Activated CD4-positive, alpha-beta T cell treated with anti-CD3 and anti-CD28 coated beads for 36 hours (primary cell): ENCODE measurements at regions of chr17 and their contacts with region 1.

Region 1: DNA sequence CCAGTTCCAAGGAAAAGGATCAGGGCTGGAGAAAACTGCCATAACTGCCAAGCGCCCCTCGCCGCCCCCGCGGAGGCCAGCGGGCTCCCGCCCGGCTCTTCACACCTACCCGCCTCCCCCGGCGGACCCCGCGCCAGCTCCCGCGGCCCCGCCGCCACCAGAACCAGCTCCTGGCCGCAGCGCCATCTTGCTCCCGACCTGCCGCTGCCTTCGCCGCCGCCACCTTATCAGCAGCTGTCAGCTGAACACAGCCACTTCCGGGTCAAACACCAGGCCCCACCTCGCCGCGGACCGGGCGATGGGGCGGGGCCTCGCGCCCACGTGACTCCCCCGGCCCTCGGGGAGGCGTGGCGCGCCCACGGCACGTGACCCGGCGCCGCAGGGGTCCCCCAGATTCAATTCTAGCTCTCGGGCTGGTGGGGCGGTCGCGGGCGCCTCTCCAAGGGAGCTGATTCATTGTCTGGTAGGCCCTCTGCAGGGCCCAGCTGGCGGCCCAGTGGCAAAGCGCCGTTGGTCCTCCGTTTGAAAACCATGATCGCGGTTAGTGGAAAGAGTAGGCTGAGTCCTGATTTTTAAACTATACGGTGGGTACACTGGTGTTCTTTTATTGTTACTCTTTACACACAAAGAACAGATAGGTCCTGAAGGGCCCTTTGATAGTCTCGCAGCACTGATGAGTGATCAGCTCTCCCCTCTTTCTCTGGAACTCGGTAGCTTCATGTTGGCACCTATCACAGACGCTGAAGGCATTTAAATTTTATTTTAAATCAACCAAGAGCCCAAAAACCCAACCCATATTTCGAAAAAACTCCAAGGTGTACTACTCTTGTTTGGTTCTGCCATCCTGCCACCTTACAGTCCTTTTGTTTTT is at the start of gene SYNRG:
- DNase-seq: peak; percentile 96
- ATAC-seq: peak; percentile 82
- H3K4me3 Mint-ChIP-seq: peak within 1 kb of the TSS; percentile 85
- H3K27ac Mint-ChIP-seq: peak within 1 kb of the TSS; percentile 98
- H3K4me1 Mint-ChIP-seq: peaks cover 37% of the 10 kb centered on the region
- H3K27me3 Mint-ChIP-seq: no peaks in the 10 kb centered on the region
- total RNA-seq, gene SYNRG: 39.0 to 46.7 TPM

Region 2: DNA sequence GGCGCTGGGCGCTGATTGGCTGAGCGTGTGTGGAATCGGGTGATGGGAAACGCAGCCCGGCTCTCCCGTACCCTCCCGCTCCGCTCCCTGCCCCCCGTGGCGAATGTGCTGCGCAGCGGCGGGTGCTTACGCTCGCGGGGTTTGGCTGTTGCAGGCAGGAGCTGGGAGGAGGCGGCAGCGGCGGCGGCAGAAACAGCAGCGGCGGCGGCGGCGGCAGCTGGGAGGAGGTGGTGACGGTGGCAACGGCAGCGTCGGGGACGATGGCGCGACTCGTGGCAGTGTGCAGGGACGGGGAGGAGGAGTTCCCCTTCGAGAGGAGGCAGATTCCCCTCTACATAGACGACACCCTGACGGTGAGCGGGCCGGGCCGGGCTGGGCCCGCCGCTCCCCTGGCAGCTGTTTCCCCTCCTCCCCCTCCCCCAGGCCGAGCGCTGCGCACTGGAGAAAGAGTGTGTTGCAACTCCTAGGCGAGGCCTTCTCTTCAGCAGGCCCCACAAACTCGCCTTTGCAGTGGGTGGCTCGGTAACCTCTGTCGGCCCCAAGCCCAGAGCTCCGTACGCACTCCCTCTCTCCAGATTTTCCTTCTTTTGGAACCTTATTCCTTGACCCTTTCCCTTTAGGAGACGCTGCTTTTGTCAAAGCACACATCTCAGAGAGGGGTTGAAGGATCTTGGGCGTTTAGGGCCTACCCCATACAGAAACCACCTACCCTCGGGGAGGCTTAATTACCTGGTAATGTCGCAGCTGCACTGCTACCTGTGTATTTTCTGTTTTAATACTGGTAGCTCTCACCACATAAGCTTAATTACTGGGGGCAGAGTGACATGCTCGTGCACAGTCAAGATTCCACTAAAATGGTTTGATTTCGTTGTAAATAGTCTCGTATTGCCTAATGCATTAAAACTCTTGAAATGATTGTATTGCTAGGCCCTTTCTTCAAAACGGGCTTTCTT is 1063.7 kb before region 1 on chr17:
- CTCF ChIA-PET with region 1: no interaction called
- POLR2A ChIA-PET with region 1: no interaction called
- intact Hi-C with region 1: loop called in 1 of 2 experiments (anchors 1 kb)
- DNase-seq: peak; percentile 98
- ATAC-seq: peak; percentile 81
- H3K4me3 Mint-ChIP-seq: peak overlapping the region; percentile 96
- H3K27ac Mint-ChIP-seq: peak overlapping the region; percentile 95
- H3K4me1 Mint-ChIP-seq: peaks cover 37% of the 10 kb centered on the region
- H3K27me3 Mint-ChIP-seq: no peaks in the 10 kb centered on the region

Region 3: DNA sequence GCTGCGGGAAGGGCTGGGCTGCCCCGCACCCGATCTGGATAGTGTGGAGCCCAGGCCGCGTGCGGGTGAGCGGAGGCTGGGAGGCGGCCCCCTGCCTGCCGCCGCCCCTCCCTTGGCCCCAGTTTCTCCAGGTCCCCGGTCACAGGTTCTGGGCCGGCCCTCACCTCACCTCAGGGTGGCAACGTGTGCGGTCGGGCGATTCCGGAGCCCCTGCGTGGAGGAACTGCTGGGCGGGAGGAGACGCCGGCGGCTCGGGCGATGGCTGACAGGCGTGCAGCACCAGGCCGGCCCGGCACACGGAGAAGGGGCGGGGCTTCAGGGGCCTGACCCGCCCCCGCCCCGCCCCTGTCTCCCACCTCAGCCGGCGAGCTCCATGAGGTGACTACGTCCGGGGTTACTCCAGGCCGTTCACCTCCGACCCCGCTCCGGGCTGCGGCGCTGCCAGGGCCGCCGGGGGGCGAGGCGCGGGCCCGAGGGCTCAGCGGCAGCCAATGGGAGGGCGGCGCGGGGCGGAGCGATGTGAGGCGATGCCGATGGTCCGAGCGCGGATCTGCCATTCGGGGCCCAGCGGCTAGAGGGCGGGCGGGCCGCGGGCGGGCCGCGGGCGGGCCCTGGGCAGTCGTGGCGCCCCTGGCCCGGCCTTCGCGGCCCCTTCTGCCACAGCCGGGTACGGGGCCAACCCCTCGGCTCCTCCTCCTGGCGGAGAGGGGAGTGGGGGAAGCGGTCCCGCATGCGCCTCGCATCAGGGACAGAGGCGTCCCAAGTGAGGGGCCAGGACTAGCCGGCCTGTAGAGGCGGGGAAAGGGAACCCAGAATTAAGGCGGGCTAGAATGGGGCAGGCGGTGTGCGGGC is 250.3 kb before region 1 on chr17:
- CTCF ChIA-PET with region 1: no interaction called
- POLR2A ChIA-PET with region 1: interaction called, 5 read pairs
- intact Hi-C with region 1: loop called in 1 of 2 experiments (anchors 1 kb)
- DNase-seq: peak; percentile 96
- ATAC-seq: peak; percentile 98
- H3K4me3 Mint-ChIP-seq: peak overlapping the region; percentile 88
- H3K27ac Mint-ChIP-seq: peak overlapping the region; percentile 83
- H3K4me1 Mint-ChIP-seq: peaks cover 23% of the 10 kb centered on the region
- H3K27me3 Mint-ChIP-seq: no peaks in the 10 kb centered on the region

Region 4: DNA sequence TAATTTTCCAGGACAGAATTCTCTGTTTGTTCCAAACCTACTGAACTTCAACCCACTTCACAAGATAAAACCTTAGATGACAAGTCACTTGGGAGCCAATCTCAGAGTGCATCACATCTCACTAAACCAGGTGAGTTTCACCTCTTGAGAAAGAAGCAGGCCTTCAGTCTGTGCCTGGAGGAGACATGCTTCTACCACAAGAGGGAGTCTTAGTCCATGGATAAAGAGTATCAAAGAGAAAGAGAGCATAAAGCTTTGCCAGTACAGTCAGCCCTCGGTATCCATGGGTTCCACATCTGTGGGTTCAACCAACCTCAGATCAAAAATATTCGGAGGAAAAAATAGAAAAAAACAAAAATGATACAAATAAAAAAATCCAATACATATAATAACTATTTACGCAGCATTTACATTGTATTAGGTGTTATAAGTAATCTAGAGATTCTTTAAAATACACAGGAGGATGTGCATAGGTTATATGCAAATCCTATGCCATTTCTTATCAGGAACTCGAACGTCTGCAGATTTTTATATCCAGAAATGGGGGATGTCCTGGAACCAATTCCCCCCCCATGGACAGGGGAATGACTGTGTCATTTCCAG is 82.1 kb before region 1 on chr17:
- CTCF ChIA-PET with region 1: interaction called, 4 read pairs
- POLR2A ChIA-PET with region 1: no interaction called
- intact Hi-C with region 1: loop called (anchors 1 to 5 kb)
- DNase-seq: peak; percentile 25
- ATAC-seq: peak; percentile 86
- H3K4me3 Mint-ChIP-seq: no peak overlapping the region
- H3K27ac Mint-ChIP-seq: no peak overlapping the region
- H3K4me1 Mint-ChIP-seq: peaks cover 7% of the 10 kb centered on the region
- H3K27me3 Mint-ChIP-seq: no peaks in the 10 kb centered on the region

Region 5: DNA sequence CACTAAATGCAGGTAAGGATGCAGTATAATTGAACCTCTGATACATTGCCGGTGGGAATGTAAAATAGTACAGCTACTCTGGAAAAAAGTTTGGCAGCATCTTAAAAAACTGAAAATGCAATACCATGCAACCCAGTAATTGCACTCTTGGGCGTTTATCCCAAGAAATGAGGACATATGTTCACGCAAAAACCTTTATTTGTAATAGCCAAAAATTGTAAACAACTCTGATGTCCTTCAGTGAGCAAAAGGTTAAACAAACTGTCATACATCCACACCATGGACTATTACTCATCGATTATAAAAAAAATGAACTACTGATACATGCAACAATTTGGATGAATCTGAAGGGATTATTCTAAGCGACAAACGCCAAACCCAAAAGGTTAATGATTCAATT is 17.1 kb before region 1 on chr17:
- CTCF ChIA-PET with region 1: interaction called, 6 read pairs
- POLR2A ChIA-PET with region 1: no interaction called
- intact Hi-C with region 1: loop called in 1 of 2 experiments (anchors 2 kb)
- DNase-seq: no peak
- ATAC-seq: no peak
- H3K4me3 Mint-ChIP-seq: no peak overlapping the region
- H3K27ac Mint-ChIP-seq: no peak overlapping the region
- H3K4me1 Mint-ChIP-seq: peaks cover 42% of the 10 kb centered on the region
- H3K27me3 Mint-ChIP-seq: no peaks in the 10 kb centered on the region

Region 6: GRCh38 chr17:38351412-38352222 is 742.2 kb after region 1 on chr17 and contains the start of gene SOCS7:
- CTCF ChIA-PET with region 1: no interaction called
- POLR2A ChIA-PET with region 1: interaction called, 7 read pairs
- intact Hi-C with region 1: loop called in 1 of 2 experiments (anchors 2 kb)
- DNase-seq: peak; percentile 95
- ATAC-seq: peak; percentile 89
- H3K4me3 Mint-ChIP-seq: peak within 1 kb of the TSS; percentile 85
- H3K27ac Mint-ChIP-seq: peak within 1 kb of the TSS; percentile 94
- H3K4me1 Mint-ChIP-seq: peaks cover 49% of the 10 kb centered on the region
- H3K27me3 Mint-ChIP-seq: no peaks in the 10 kb centered on the region
- total RNA-seq, gene SOCS7: 21.8 to 25.3 TPM